ENCODE measurements at regions of chr20 and their contacts with region 1.

Region 1: DNA sequence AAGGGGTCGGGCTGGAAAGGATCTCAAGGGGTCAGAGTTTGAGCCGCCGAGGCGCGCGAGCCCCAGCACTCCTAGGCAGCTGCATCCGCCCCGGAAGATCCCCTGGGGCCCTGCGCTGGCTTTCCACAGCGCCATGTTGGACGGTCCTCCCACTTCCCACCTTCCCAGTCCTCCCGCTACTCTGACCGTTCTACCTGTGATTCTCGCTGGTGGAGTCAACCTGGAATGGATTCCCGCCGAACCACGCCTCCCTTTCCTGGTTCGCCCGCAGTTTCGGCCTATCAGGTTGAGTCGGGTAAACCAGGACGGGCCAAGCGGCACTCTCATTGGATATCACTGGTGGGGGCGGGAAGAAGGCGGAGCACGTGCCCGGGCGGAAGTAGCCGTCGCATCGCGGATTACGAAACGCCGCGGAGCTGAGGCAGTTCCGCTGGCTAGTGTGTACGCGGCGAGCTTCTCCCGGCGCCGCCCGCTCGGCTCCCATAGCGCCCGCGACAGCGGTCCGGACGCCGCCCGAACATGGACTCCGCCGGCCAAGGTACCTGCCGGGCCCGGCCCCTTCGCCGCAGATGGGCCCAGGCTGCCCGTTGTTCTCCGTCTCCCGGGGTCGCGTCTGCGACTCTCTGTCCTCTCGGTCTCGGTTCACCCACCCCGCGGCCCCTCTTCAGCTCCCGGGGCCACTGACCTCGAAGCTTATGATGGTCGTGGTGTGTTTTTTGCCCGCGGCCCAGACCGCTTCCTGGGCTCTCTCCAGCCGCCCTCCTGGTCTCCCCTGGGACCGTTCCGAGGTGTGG is at the start of gene TPD52L2:
- DNase-seq: peak; percentile 99
- H3K4me3 Mint-ChIP-seq: peak within 1 kb of the TSS; percentile 78
- H3K27ac Mint-ChIP-seq: peak within 1 kb of the TSS; percentile 87
- H3K4me1 Mint-ChIP-seq: peaks cover 32% of the 10 kb centered on the region
- H3K27me3 Mint-ChIP-seq: no peaks in the 10 kb centered on the region
- total RNA-seq, gene TPD52L2: 67.8 to 70.8 TPM

Region 2: GRCh38 chr20:63641792-63642544 is 223.1 kb before region 1 on chr20:
- CTCF ChIA-PET with region 1: interaction called, 5 read pairs
- POLR2A ChIA-PET with region 1: no interaction called
- intact Hi-C with region 1: loop called (anchors 1 kb)
- DNase-seq: peak; percentile 97
- H3K4me3 Mint-ChIP-seq: peak overlapping the region; percentile 69
- H3K27ac Mint-ChIP-seq: peak overlapping the region; percentile 77
- H3K4me1 Mint-ChIP-seq: peaks cover 26% of the 10 kb centered on the region
- H3K27me3 Mint-ChIP-seq: no peaks in the 10 kb centered on the region

Region 3: DNA sequence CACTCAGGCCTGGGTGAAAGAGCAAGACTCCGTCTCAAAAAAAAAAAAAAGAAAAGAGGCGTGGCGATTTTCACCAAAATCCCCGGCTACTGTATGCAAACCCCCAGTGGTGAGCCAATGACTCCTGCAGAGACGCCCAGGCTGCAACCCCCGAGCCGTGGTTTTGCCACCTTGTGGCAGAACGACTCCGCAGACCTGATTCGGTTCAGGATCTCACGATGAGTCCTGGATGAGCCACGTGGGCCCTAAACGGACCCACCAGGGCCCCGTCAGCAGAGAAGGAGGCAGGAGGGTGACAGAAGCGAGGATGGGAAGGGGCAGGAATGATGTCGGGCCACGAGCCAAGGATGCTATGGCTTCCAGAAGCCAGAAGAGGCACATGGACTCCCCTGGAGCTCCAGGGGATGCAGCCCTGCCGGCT is 83.0 kb before region 1 on chr20:
- CTCF ChIA-PET with region 1: interaction called, 30 read pairs
- POLR2A ChIA-PET with region 1: no interaction called
- intact Hi-C with region 1: loop called (anchors 2 kb)
- DNase-seq: peak; percentile 79
- H3K4me3 Mint-ChIP-seq: no peak overlapping the region
- H3K27ac Mint-ChIP-seq: no peak overlapping the region
- H3K4me1 Mint-ChIP-seq: peaks cover 13% of the 10 kb centered on the region
- H3K27me3 Mint-ChIP-seq: no peaks in the 10 kb centered on the region

Region 4: GRCh38 chr20:63894358-63895201 is 29.5 kb after region 1 on chr20 and contains the start of gene DNAJC5:
- CTCF ChIA-PET with region 1: interaction called, 12 read pairs
- POLR2A ChIA-PET with region 1: interaction called, 8 read pairs
- intact Hi-C with region 1: loop called (anchors 2 kb)
- DNase-seq: peak; percentile 97
- H3K4me3 Mint-ChIP-seq: peak within 1 kb of the TSS; percentile 97
- H3K27ac Mint-ChIP-seq: peak within 1 kb of the TSS; percentile 97
- H3K4me1 Mint-ChIP-seq: peaks cover 37% of the 10 kb centered on the region
- H3K27me3 Mint-ChIP-seq: no peaks in the 10 kb centered on the region
- total RNA-seq, gene DNAJC5: 33.7 to 33.8 TPM

Region 5: GRCh38 chr20:63980806-63981728 is 116.0 kb after region 1 on chr20 and contains the start of gene PRPF6:
- CTCF ChIA-PET with region 1: interaction called, 14 read pairs
- POLR2A ChIA-PET with region 1: interaction called, 15 read pairs
- intact Hi-C with region 1: loop called (anchors 2 kb)
- DNase-seq: peak; percentile 97
- H3K4me3 Mint-ChIP-seq: peak within 1 kb of the TSS; percentile 84
- H3K27ac Mint-ChIP-seq: peak within 1 kb of the TSS; percentile 96
- H3K4me1 Mint-ChIP-seq: peaks cover 60% of the 10 kb centered on the region
- H3K27me3 Mint-ChIP-seq: no peaks in the 10 kb centered on the region
- total RNA-seq, gene PRPF6: 62.3 to 63.1 TPM

Measured in activated CD4-positive, alpha-beta memory T cell treated with anti-CD3 and anti-CD28 coated beads for 36 hours (primary cell).